Endothelial cell of umbilical vein (primary cell): ENCODE measurements at regions of chr4 and their contacts with region 1.

Region 1: DNA sequence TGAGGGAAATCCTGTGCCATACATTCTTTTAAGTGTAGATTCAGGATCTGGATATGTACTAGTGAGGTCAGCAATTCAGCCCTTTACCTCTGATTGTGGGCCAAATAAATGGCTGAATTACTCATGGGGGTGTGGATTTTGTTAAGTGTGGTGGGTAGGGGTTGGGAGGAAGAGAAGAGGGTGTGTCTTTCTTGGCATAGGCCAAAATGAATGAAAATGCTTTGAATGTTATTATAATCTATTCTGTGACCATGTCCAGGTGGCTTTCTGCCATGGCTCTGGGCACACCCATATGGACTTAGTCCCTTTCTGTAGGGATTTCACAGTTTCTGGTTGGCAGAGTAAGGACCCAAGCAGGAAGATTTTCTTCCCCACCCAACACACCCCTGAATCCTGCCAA is 244.3 kb downstream of the CBR4 start:
- DNase-seq: peak; percentile 42
- H3K4me3 ChIP-seq: no peak overlapping the region
- H3K27ac ChIP-seq: no peak overlapping the region
- H3K4me1 ChIP-seq: peaks cover 19% of the 10 kb centered on the region
- H3K27me3 ChIP-seq: no peaks in the 10 kb centered on the region
- CTCF ChIP-seq: no peak
- POLR2A ChIP-seq: no peak

Region 2: DNA sequence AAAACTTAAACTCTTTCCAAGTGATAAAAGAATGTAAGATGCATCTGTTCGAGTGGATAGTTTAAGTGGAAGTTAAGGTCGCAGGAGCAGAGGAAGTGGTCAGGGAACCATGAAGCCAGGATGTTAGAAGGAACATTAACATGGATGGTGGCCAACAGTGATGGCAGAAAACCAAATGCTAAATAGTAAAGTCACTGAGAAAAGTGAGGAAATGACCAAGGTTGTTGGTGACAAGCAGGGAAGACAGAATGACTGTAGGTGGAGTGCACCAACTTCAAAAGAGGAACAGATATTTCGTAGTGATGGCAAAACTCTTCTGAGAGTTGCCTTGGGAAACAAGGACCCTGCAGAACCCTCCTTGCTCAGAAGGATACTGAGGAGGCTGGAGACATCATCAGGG is 42.7 kb before region 1 on chr4:
- CTCF ChIA-PET with region 1: interaction called, 3 read pairs
- POLR2A ChIA-PET with region 1: no interaction called
- dilution Hi-C with region 1: no loop called
- intact Hi-C with region 1: loop called (anchors 5 kb)
- DNase-seq: peak; percentile 61
- H3K4me3 ChIP-seq: peak overlapping the region in 1 of 3 experiments; percentile 52
- H3K27ac ChIP-seq: peak overlapping the region; percentile 17
- H3K4me1 ChIP-seq: peaks cover 14% of the 10 kb centered on the region
- H3K27me3 ChIP-seq: no peaks in the 10 kb centered on the region
- CTCF ChIP-seq: no peak
- POLR2A ChIP-seq: no peak

Region 3: GRCh38 chr4:168797176-168797575 is 31.4 kb after region 1 on chr4:
- CTCF ChIA-PET with region 1: no interaction called
- POLR2A ChIA-PET with region 1: no interaction called
- dilution Hi-C with region 1: no loop called
- intact Hi-C with region 1: loop called (anchors 2 kb)
- DNase-seq: peak; percentile 72
- H3K4me3 ChIP-seq: no peak overlapping the region
- H3K27ac ChIP-seq: peak overlapping the region; percentile 47
- H3K4me1 ChIP-seq: peaks cover 22% of the 10 kb centered on the region
- H3K27me3 ChIP-seq: no peaks in the 10 kb centered on the region
- CTCF ChIP-seq: no peak
- POLR2A ChIP-seq: no peak